T-cell (primary cell): ENCODE measurements at regions of chr12 and their contacts with region 1.

Region 1: DNA sequence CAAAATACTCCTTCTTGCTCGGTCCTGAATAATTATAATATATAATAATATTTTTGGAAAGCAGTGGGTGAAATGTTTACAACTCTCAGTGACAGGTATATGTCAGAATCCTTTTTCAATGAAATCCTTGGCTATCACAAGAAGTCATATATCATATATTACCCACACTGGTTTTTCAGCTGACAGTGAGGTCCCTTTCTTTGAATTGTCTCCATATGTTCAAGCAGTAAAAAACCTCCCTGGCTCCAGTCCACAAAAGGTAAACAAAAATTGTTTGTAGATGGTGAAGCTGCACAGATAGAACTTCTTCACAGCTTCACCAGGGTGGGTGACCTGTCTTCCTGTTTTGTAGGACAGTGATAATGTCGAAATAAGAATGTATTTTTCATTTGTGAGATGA is 44.0 kb downstream of the A2ML1 start:
- DNase-seq: no peak
- ATAC-seq: no peak
- H3K4me3 ChIP-seq: no peak overlapping the region
- H3K4me3 Mint-ChIP-seq: no peak overlapping the region
- H3K27ac ChIP-seq: no peak overlapping the region
- H3K27ac Mint-ChIP-seq: no peak overlapping the region
- H3K4me1 ChIP-seq: no peaks in the 10 kb centered on the region
- H3K4me1 Mint-ChIP-seq: no peaks in the 10 kb centered on the region
- H3K27me3 ChIP-seq: no peaks in the 10 kb centered on the region
- H3K27me3 Mint-ChIP-seq: peaks cover 0 to 3% of the 10 kb centered on the region in 2 donors

Region 2: DNA sequence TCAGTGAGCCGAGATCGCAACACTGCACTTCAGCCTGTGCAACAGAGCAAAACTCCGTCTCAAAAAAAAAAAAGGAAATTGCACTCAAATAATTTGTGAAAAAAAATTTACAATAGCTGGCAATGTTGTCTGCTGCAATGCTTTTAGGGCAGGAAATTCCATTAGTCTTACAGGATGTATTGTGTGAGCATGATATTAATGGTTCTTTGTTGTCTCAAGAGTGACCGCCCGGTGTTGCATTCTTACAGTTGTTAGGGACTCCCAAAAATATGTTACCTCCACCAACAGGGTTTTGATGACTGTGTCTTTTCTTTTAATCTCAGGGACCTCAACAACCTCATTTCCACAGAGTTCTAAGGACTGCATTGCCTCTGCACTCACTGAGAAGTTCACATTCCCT is 297.0 kb after region 1 on chr12:
- CTCF ChIA-PET with region 1: interaction called in 1 of 2 experiments, 10 read pairs
- POLR2A ChIA-PET with region 1: no interaction called
- DNase-seq: no peak
- ATAC-seq: no peak
- H3K4me3 ChIP-seq: no peak overlapping the region
- H3K4me3 Mint-ChIP-seq: no peak overlapping the region
- H3K27ac ChIP-seq: no peak overlapping the region
- H3K27ac Mint-ChIP-seq: no peak overlapping the region
- H3K4me1 ChIP-seq: no peaks in the 10 kb centered on the region
- H3K4me1 Mint-ChIP-seq: no peaks in the 10 kb centered on the region
- H3K27me3 ChIP-seq: no peaks in the 10 kb centered on the region
- H3K27me3 Mint-ChIP-seq: no peaks in the 10 kb centered on the region